ENCODE measurements at regions of chr2 and their contacts with region 1.

Region 1: GRCh38 chr2:161586517-161587167 is 37.6 kb upstream of the SLC4A10 start:
- DNase-seq: no peak
- H3K4me3 ChIP-seq: no peak overlapping the region
- H3K27ac ChIP-seq: no peak overlapping the region
- H3K4me1 ChIP-seq: no peaks in the 10 kb centered on the region
- H3K27me3 ChIP-seq: no peaks in the 10 kb centered on the region
- CTCF ChIP-seq: peak; percentile 56

Region 2: DNA sequence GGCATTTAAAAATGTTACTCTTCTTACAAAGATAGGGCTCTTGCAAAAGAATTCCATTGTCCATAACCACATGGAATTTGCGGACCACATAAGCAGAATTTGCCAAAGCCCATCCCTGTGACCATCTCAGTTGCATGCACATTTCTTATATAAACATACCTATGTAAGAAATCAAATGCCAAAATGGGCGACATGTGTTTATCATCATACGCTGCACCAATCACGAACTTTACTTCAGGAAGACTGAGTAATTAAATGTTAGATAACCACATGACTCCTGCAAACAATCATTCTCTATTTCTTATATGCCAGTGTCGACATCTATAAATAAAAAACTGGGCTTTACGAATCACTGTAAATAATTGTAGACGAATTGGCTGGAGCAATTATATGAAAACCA is 907.0 kb before region 1 on chr2:
- intact Hi-C with region 1: no loop called
- DNase-seq: no peak
- H3K4me3 ChIP-seq: no peak overlapping the region
- H3K27ac ChIP-seq: no peak overlapping the region
- H3K4me1 ChIP-seq: no peaks in the 10 kb centered on the region
- H3K27me3 ChIP-seq: no peaks in the 10 kb centered on the region
- CTCF ChIP-seq: no peak

Region 3: DNA sequence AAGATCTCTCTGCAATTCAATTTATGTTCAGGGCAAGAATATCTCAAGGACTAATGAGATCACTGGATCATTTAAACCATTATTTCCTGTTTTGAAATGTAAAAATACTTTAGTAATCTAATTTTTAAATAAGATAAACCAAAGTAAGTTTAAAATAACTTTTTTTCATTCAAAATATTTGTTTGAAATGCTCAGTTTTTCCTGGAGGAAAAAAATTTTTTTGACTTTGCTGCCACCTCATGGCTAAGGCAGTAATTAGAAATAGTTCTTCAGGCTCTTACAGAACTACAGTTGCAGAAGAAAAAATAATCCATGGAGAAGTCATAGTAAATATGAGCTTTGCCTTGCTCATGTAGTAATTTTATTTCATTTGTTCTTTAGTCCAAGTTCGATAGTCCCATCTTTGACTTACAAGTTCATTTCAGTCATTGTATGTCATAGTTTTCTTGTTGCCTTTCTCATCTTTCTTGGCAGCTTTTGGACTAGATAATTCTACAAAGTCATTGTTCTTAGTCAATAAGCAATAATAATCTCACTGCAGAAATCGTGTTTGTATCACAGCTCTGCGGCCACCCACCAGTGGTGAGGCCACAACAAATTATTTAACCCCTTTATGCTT is 360.0 kb after region 1 on chr2:
- intact Hi-C with region 1: loop called (anchors 2 kb)
- DNase-seq: peak; percentile 40
- H3K4me3 ChIP-seq: no peak overlapping the region
- H3K27ac ChIP-seq: no peak overlapping the region
- H3K4me1 ChIP-seq: no peaks in the 10 kb centered on the region
- H3K27me3 ChIP-seq: no peaks in the 10 kb centered on the region
- CTCF ChIP-seq: peak; percentile 52

Region 4: DNA sequence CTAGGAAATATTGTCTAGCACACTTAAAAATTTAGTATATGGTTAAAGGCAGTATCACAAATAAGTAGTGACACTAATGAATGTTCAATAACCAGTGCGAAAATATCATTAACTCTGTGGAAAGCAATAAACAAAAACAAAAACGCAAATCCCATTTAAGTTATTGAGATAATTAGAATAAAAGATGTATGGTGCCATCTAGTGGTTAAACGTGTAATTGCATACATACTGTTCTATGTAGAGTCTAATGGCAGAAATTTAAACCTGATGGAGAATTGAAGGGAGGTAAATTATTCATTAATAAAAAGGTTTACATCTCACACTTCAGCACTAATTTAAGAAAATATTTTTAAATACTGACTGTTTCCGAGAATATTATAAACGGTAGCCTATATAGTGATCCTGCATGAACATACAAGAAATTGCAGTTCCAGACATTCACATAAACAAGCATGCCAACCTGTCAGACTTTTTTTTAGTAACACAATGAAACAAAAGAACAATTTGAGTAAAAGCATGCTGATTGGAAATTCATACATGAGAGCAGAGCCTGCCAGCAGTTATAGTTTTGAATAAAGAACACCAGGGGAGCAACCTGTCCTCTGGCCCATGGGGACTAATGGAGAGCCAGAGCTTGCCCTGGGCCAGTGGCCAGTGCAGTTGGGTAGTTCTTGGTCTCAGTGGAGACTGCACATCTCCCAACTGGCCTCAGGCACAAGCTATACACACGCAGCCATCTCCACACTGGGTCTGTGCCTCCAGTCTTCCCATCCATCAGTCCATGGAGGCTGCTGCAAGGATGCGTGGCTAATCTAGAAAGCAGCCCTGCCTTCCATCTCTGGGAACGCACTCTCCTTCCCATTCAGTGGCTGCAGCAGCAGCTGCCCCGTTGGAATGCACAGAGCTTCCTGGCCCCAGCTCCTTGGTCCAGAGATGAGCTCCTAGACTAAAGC is 537.4 kb after region 1 on chr2:
- intact Hi-C with region 1: loop called (anchors 5 kb)
- DNase-seq: no peak
- H3K4me3 ChIP-seq: no peak overlapping the region
- H3K27ac ChIP-seq: no peak overlapping the region
- H3K4me1 ChIP-seq: no peaks in the 10 kb centered on the region
- H3K27me3 ChIP-seq: no peaks in the 10 kb centered on the region
- CTCF ChIP-seq: peak; percentile 83

Measured in colonic mucosa (tissue), 4 donors.